ENCODE measurements at regions of chr11 and their contacts with region 1.

Region 1: DNA sequence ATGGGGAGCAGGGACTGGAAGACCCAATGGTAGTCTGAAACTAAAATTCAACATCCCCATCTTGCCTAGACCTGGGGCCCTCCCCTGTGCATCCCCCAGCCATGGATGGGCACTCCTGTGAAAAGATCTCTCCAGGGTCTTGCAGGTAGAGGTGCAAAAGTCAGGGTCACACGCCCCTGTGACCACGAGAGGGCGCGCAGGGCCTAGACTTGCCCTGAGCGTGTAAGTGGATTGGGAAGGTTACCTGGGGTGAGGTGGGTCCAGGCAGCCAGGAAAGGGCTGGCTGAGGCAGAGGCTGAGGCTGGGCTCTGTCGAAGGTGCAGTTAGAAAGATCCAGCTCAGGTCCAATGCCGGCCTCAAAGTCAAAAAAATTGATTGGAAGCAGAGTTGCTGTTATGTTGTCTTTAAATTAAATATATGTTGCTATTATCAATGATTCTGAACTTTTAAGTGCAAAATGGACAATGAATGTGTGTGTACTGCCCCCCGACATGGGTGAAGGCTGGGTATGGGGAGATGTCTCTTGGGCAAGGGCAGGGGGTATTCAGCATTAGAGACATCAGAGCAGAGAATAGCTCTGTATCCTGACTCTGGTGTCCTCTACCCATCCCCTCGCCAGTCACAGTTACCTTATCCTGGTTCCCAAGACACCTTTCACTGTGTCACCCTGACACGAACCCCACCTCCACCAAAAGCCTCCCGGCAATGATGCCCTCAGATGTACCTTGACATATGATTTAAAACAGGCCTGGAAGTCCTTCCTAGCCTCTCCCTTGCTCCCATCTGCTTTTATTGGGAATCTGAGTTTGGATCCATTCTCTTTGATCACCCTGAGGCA is 4.7 kb upstream of the POU2F3 start:
- DNase-seq: no peak
- H3K4me3 ChIP-seq: no peak overlapping the region
- H3K27me3 ChIP-seq: peaks cover 36% of the 10 kb centered on the region
- CTCF ChIP-seq: peak; percentile 80

Region 2: DNA sequence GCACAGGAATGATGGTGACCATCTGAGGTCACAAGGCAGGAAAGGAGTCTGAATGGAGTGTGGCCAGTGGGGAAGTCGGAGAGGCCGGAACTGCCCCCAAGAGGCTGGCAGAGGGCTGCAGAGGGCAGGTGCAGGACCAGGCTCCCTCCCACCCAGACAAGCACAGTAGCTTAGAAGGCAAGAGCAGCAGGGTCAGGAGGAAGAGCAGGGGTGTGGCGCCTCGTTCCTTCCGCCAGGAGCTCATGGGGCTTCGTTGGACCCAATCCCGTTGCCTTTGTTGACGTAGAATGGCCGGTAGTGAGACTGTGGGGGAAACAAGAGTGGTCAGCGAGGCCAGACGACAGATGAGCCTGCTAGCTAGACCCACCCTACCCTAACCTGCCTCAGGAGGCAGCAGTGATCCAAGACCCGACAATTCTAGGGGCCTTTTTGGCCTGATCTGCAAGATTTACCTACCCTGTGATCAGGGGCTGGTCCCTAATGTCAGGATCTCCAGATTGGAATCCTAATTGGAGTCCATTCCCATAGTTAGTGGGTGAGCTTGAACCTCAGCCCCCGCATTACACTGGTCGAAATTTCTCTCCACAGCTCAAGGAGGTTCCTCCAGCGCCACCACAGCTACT is 123.0 kb before region 1 on chr11:
- CTCF ChIA-PET with region 1: no interaction called
- POLR2A ChIA-PET with region 1: no interaction called
- DNase-seq: no peak
- H3K4me3 ChIP-seq: no peak overlapping the region
- H3K27me3 ChIP-seq: peaks cover 12% of the 10 kb centered on the region
- CTCF ChIP-seq: no peak

Region 3: GRCh38 chr11:120182790-120183491 is 52.3 kb before region 1 on chr11:
- CTCF ChIA-PET with region 1: interaction called, 37 read pairs
- POLR2A ChIA-PET with region 1: no interaction called
- DNase-seq: no peak
- H3K4me3 ChIP-seq: no peak overlapping the region
- H3K27me3 ChIP-seq: peaks cover 2% of the 10 kb centered on the region
- CTCF ChIP-seq: peak; percentile 44; the same call in 1 of the 2 replicates

Region 4: GRCh38 chr11:120248551-120249278 is 13.5 kb after region 1 on chr11:
- CTCF ChIA-PET with region 1: interaction called, 57 read pairs
- POLR2A ChIA-PET with region 1: no interaction called
- DNase-seq: no peak
- H3K4me3 ChIP-seq: no peak overlapping the region
- H3K27me3 ChIP-seq: peaks cover 27% of the 10 kb centered on the region
- CTCF ChIP-seq: no peak

Measured in BJ (cell line).